AG04450 (cell line): ENCODE measurements at regions of chr18 and their contacts with region 1.

Region 1: DNA sequence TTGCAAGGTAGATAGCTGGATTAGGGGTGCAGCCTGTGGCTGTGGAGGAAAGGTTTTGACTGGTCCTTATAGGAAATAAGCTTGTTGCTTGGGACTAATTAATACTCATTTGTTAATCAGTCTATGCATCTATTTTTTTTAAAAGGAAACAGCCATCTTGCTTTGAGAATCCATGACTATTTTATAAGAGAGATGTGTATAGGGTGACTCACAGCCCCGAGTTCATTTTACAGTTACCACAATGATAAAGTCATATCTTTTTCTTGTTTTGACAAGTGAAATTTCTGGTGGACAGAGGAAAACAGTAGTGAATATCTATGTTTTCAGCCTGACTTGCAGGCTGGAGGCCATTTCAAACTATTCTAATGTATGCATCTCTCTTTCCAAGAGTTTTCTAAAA is 193.5 kb upstream of the CCDC68 start:
- DNase-seq: no peak
- H3K4me3 ChIP-seq: no peak overlapping the region
- H3K27ac ChIP-seq: no peak overlapping the region
- H3K27me3 ChIP-seq: peaks cover 6% of the 10 kb centered on the region
- CTCF ChIP-seq: no peak

Region 2: GRCh38 chr18:54950221-54950620 is 202.6 kb before region 1 on chr18:
- CTCF ChIA-PET with region 1: no interaction called
- POLR2A ChIA-PET with region 1: no interaction called
- DNase-seq: no peak
- H3K4me3 ChIP-seq: no peak overlapping the region
- H3K27ac ChIP-seq: no peak overlapping the region
- H3K27me3 ChIP-seq: no peaks in the 10 kb centered on the region
- CTCF ChIP-seq: no peak

Region 3: DNA sequence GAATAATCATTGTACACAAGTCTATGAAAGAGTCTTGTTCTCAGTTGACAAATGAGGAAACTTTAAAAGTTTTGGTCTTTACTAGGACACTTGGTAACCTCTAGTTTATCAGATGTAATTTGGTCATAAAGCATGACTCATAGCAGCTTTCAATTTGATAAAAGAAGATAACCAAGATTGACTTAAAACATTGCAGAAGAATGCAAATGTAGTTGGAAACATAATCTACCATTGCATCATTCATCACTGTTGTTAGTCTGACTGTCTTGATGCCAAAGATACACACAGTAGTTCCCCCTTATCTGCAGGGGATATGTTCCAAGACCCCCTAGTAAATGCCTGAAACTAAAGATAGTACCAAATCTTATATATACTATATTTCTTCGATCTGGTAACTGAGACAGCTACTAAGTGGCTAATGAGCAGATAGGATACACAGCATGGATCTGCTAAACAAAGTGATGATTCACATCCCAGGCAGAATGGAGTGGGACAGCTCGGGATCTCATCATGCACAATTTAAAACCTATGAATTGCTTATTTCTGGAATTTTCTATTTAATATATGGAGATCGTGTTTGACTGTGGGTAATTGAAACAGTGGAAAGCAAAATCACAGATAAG is 62.1 kb before region 1 on chr18:
- CTCF ChIA-PET with region 1: no interaction called
- POLR2A ChIA-PET with region 1: no interaction called
- DNase-seq: no peak
- H3K4me3 ChIP-seq: no peak overlapping the region
- H3K27ac ChIP-seq: no peak overlapping the region
- H3K27me3 ChIP-seq: no peaks in the 10 kb centered on the region
- CTCF ChIP-seq: no peak

Region 4: DNA sequence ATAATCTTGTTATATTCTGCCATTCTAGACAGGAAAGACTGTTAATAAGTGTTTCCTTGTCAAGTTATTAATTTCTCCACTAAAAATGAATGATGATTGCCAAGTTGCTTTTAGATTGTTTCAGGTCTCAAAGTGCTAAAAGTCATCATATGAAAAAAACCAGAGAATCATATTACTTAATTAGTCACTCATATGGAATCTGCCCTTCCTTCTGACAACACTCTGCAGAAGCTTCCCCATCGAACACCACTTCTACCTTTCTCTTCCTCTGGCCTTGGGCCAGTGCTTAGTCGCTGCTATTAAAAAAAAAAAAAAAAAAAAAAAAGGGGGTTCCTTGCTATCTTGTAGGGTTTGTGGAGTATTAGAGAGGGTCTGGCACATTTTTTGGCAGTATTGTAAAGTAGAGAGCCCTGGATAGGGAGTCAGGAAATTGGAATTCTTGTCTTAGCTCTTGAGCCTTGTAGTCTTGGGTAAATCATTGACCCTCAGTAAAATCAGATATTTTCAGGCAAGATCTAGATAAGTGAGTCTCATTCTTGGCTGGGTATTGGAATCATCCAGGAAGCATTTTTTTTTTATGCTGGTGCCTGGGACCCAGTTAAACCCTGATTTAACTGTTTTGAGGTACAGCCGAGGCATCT is 51.9 kb before region 1 on chr18:
- CTCF ChIA-PET with region 1: no interaction called
- POLR2A ChIA-PET with region 1: interaction called, 10 read pairs
- DNase-seq: no peak
- H3K4me3 ChIP-seq: no peak overlapping the region
- H3K27ac ChIP-seq: no peak overlapping the region
- H3K27me3 ChIP-seq: no peaks in the 10 kb centered on the region
- CTCF ChIP-seq: no peak